Aorta (tissue), 5 donors: ENCODE measurements at regions of chr16 and their contacts with region 1.

Region 1: GRCh38 chr16:58042001-58042885 is 16.7 kb downstream of the MMP15 start:
- DNase-seq: no peak
- ATAC-seq: no peak
- H3K4me3 ChIP-seq: no peak overlapping the region
- H3K27ac ChIP-seq: no peak overlapping the region
- H3K4me1 ChIP-seq: no peaks in the 10 kb centered on the region
- H3K27me3 ChIP-seq: no peaks in the 10 kb centered on the region

Region 2: GRCh38 chr16:58105631-58106030 is 63.4 kb after region 1 on chr16:
- intact Hi-C with region 1: loop called in 1 of 2 experiments (anchors 2 kb)
- DNase-seq: peak in 1 of 2 donors; percentile 10
- ATAC-seq: no peak
- H3K4me3 ChIP-seq: no peak overlapping the region
- H3K27ac ChIP-seq: no peak overlapping the region
- H3K4me1 ChIP-seq: no peaks in the 10 kb centered on the region
- H3K27me3 ChIP-seq: no peaks in the 10 kb centered on the region